ENCODE measurements at regions of chr3 and their contacts with region 1.

Region 1: GRCh38 chr3:172646439-172647015 is 64.3 kb downstream of the NCEH1 start:
- DNase-seq: peak in 1 of 2 experiments; percentile 63
- H3K4me3 ChIP-seq: no peak overlapping the region
- H3K27ac ChIP-seq: no peak overlapping the region
- H3K4me1 ChIP-seq: peaks cover 6% of the 10 kb centered on the region; the same call in 1 of the 2 replicates
- H3K27me3 ChIP-seq: no peaks in the 10 kb centered on the region
- CTCF ChIP-seq: no peak

Region 2: GRCh38 chr3:170717410-170718402 is 1928.8 kb before region 1 on chr3:
- CTCF ChIA-PET with region 1: no interaction called
- POLR2A ChIA-PET with region 1: no interaction called
- intact Hi-C with region 1: loop called (anchors 5 kb)
- DNase-seq: peak; percentile 60 to 63
- H3K4me3 ChIP-seq: no peak overlapping the region
- H3K27ac ChIP-seq: no peak overlapping the region
- H3K4me1 ChIP-seq: peaks cover 26% of the 10 kb centered on the region
- H3K27me3 ChIP-seq: no peaks in the 10 kb centered on the region
- CTCF ChIP-seq: no peak

Region 3: DNA sequence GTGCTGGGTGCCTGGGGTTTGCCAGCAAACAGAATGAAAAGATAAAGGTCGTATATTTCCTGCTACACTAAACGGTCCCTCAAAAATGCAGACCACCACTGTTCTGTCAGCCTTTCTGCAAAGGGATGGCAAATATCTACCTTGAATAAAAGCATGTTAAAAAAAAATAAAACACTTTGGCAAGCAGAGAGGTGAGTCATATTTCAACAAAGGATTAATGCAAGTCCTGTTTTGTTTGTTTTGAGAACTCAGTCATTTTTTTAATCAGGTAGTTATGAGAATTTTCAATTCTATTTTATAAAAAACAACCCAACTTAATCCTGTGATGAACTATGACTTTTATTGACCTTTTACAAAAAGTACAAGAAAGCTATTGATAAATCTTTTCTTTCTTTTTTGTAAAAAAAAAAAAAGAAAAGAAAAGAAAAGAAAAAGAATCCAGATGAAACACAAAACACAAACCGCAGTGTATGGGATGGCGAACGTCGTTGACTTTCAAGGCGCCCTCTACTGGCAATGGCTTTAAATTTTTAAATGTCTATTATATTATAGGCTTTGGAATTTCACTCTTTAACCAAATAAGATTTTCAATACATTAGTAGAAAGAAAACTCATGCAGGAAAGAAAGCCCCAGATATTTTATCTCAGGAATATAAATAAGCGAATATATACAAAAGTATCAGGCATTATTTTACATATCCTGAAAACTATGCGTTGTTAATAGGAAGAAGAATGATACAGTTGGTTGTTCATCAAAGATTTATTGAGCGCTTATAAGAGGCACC is 23.4 kb before region 1 on chr3:
- CTCF ChIA-PET with region 1: no interaction called
- POLR2A ChIA-PET with region 1: no interaction called
- intact Hi-C with region 1: no loop called
- DNase-seq: peak; percentile 46 to 87
- H3K4me3 ChIP-seq: peak overlapping the region; percentile 30; the same call in 1 of the 2 replicates
- H3K27ac ChIP-seq: peak overlapping the region; percentile 38; the same call in 1 of the 2 replicates
- H3K4me1 ChIP-seq: peaks cover 37% of the 10 kb centered on the region
- H3K27me3 ChIP-seq: no peaks in the 10 kb centered on the region
- CTCF ChIP-seq: peak; percentile 95

Measured in PC-9 (cell line).